CD8-positive, alpha-beta T cell (primary cell): ENCODE measurements at regions of chr11 and their contacts with region 1.

Region 1: GRCh38 chr11:35192347-35192746 is 53.4 kb downstream of the CD44 start:
- DNase-seq: no peak
- ATAC-seq: no peak
- H3K4me3 ChIP-seq: no peak overlapping the region
- H3K4me3 Mint-ChIP-seq: no peak overlapping the region
- H3K27ac ChIP-seq: no peak overlapping the region
- H3K27ac Mint-ChIP-seq: peak overlapping the region; percentile 56
- H3K4me1 ChIP-seq: peaks cover 55% of the 10 kb centered on the region
- H3K4me1 Mint-ChIP-seq: peaks cover 95% of the 10 kb centered on the region
- H3K27me3 ChIP-seq: no peaks in the 10 kb centered on the region
- H3K27me3 Mint-ChIP-seq: no peaks in the 10 kb centered on the region
- CTCF ChIP-seq: no peak

Region 2: GRCh38 chr11:35207471-35208403 is 15.4 kb after region 1 on chr11:
- CTCF ChIA-PET with region 1: no interaction called
- POLR2A ChIA-PET with region 1: no interaction called
- intact Hi-C with region 1: loop called in 1 of 2 experiments (anchors 2 kb)
- DNase-seq: no peak
- ATAC-seq: no peak
- H3K4me3 ChIP-seq: no peak overlapping the region
- H3K4me3 Mint-ChIP-seq: no peak overlapping the region
- H3K27ac ChIP-seq: no peak overlapping the region
- H3K27ac Mint-ChIP-seq: peak overlapping the region; percentile 47
- H3K4me1 ChIP-seq: peaks cover 5% of the 10 kb centered on the region
- H3K4me1 Mint-ChIP-seq: peaks cover 65% of the 10 kb centered on the region
- H3K27me3 ChIP-seq: no peaks in the 10 kb centered on the region
- H3K27me3 Mint-ChIP-seq: no peaks in the 10 kb centered on the region
- CTCF ChIP-seq: no peak

Region 3: GRCh38 chr11:35260342-35260985 is 68.1 kb after region 1 on chr11:
- CTCF ChIA-PET with region 1: no interaction called
- POLR2A ChIA-PET with region 1: no interaction called
- intact Hi-C with region 1: no loop called
- DNase-seq: no peak
- ATAC-seq: no peak
- H3K4me3 ChIP-seq: no peak overlapping the region
- H3K4me3 Mint-ChIP-seq: no peak overlapping the region
- H3K27ac ChIP-seq: no peak overlapping the region
- H3K27ac Mint-ChIP-seq: no peak overlapping the region
- H3K4me1 ChIP-seq: peaks cover 26% of the 10 kb centered on the region
- H3K4me1 Mint-ChIP-seq: peaks cover 32% of the 10 kb centered on the region
- H3K27me3 ChIP-seq: no peaks in the 10 kb centered on the region
- H3K27me3 Mint-ChIP-seq: no peaks in the 10 kb centered on the region
- CTCF ChIP-seq: no peak